ENCODE measurements at regions of chr5 and their contacts with region 1.

Region 1: DNA sequence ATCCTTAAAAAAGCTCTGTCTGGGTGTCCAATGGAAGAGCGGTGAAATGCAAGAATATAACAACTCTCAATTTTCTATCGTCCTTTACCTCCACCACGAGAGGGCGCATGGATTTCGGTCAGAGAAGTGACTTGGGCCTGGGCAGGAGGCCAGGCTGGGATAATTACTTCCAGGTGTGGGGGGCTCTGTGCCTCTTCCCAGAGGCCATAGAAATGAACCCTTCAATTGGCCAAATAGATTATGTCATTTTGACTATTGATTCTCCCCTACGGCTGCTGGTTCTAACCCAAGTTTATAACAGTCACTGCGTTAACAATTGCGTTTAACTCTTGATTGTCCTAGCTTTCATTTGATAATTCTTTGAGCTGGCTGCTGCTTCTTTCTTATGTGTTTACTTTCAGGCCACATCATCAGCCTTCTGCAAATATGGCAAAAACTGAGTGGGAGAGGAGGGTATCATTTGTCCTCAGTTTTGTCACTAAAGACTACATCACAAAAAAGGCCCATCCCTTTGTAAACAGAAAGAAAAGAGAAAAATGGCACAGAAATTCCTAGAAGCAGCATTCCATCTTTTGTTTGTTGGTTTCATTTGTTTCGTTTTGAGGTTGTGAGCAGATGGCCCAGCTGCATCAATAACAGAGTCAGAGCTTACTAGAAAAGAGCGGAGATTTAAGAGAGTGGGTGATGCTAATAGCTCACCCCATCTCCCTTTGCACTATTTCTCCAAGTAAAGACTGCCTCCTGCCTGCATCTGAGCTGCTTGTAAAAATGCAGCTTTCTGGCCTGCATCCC is 45.4 kb upstream of the ZFR start:
- DNase-seq: peak; percentile 76
- ATAC-seq: peak; percentile 69
- H3K4me3 Mint-ChIP-seq: no peak overlapping the region
- H3K27ac Mint-ChIP-seq: no peak overlapping the region
- H3K4me1 Mint-ChIP-seq: no peaks in the 10 kb centered on the region
- H3K27me3 Mint-ChIP-seq: peaks cover 2% of the 10 kb centered on the region

Region 2: DNA sequence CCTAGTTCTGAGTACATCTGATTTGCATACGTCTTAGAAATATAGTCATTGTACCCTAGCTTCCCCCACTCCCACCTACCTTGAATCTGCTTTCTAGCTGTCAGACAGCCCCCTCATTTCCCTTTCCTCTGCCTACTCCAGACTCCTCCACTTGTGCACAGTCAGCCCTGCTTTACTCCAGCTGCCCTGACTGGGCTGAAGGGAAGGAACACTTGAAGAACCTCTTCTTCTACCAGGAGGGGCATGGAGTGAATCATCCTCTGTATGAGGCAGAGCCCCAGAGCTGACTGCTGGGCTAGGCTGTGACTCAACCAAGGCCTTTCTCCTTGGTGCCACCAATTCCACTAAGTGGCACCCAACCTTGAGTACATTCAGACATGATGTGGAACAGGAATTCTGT is 27.4 kb before region 1 on chr5:
- CTCF ChIA-PET with region 1: interaction called, 10 read pairs
- POLR2A ChIA-PET with region 1: no interaction called
- DNase-seq: no peak
- ATAC-seq: no peak
- H3K4me3 Mint-ChIP-seq: no peak overlapping the region
- H3K27ac Mint-ChIP-seq: no peak overlapping the region
- H3K4me1 Mint-ChIP-seq: peaks cover 2% of the 10 kb centered on the region
- H3K27me3 Mint-ChIP-seq: peaks cover 4% of the 10 kb centered on the region

Region 3: DNA sequence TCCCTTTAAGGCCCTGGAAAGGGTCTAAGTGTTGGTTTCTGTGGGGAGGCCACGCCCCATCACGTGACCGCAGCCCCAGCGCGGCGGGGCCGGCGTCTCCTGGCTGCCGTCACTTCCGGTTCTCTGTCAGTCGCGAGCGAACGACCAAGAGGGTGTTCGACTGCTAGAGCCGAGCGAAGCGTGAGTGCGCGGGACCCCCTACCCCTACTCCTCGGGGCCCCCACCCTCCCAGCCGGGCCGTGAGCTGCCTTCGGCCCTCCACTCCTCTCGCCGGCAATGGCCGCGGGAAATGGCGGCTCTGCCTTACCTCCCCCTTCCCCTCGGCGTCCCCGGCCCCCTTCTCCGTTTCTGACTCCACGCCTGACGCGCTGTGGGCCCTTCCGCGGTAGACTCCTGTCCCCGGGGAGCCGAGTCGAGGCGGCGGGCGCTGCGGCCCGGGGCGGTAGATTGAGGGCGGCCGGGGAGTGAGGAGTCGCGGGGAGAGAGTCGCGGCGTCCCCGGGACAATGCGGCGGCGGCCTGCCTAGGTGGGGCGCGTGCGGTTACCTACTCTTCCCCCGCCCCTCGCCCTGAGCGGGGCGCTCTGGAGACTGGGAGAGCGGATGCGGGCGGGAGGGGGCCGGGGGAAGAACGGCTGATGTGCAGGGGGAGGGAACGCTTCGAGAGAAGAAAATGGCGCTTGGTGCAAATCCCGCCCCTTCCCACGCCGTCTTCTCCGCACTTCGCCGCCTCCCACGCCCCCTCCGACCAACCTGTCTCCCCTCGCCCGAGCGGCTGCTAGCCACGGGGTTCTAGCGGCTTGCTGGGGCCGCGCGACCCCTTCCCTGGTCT is 95.7 kb after region 1 on chr5 and contains the start of gene SUB1:
- CTCF ChIA-PET with region 1: interaction called, 193 read pairs
- POLR2A ChIA-PET with region 1: interaction called, 10 read pairs
- DNase-seq: peak; percentile 95
- ATAC-seq: peak; percentile 92
- H3K4me3 Mint-ChIP-seq: peak within 1 kb of the TSS; percentile 82
- H3K27ac Mint-ChIP-seq: peak within 1 kb of the TSS; percentile 88
- H3K4me1 Mint-ChIP-seq: peaks cover 62% of the 10 kb centered on the region
- H3K27me3 Mint-ChIP-seq: no peaks in the 10 kb centered on the region
- total RNA-seq, gene SUB1: 352 to 377 TPM

Region 4: GRCh38 chr5:32595118-32595517 is 105.1 kb after region 1 on chr5:
- CTCF ChIA-PET with region 1: interaction called, 193 read pairs
- POLR2A ChIA-PET with region 1: interaction called, 10 read pairs
- DNase-seq: no peak
- ATAC-seq: peak; percentile 60
- H3K4me3 Mint-ChIP-seq: no peak overlapping the region
- H3K27ac Mint-ChIP-seq: peak overlapping the region; percentile 37
- H3K4me1 Mint-ChIP-seq: peaks cover 67% of the 10 kb centered on the region
- H3K27me3 Mint-ChIP-seq: no peaks in the 10 kb centered on the region

Region 5: DNA sequence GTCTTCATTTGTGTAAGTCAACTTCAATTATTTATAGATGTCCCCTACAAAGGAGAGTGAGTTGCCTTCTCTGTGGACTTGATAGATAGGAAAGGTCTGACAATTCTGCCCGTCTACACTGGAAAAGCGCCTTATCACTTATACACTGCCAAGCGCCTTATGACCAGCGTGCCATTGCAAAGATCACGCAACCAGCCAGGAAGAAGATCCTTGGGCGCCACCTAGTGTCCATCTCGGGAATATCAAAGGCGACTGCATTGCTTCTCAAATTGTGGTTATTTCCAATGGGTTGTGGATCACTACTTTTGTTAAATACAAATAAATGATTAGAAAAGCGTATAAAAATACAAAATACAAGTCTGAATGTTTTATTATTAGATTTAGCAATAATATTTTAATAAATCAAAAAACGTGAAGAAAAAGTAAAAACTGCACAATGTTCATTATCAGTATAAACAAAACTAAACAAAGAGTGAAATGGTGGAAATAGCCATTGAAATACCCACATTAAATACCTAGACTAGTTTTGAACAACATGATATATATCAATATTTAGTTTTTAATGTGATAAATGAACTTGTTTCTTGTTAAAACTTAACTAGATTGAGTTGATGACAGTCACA is 123.2 kb after region 1 on chr5:
- CTCF ChIA-PET with region 1: interaction called, 49 read pairs
- POLR2A ChIA-PET with region 1: no interaction called
- DNase-seq: peak; percentile 87
- ATAC-seq: peak; percentile 70
- H3K4me3 Mint-ChIP-seq: no peak overlapping the region
- H3K27ac Mint-ChIP-seq: no peak overlapping the region
- H3K4me1 Mint-ChIP-seq: peaks cover 3% of the 10 kb centered on the region
- H3K27me3 Mint-ChIP-seq: no peaks in the 10 kb centered on the region

Region 6: GRCh38 chr5:32859211-32859641 is 369.2 kb after region 1 on chr5:
- CTCF ChIA-PET with region 1: no interaction called
- POLR2A ChIA-PET with region 1: no interaction called
- DNase-seq: no peak
- ATAC-seq: no peak
- H3K4me3 Mint-ChIP-seq: no peak overlapping the region
- H3K27ac Mint-ChIP-seq: no peak overlapping the region
- H3K4me1 Mint-ChIP-seq: no peaks in the 10 kb centered on the region
- H3K27me3 Mint-ChIP-seq: no peaks in the 10 kb centered on the region

Region 7: GRCh38 chr5:32887382-32887781 is 397.4 kb after region 1 on chr5:
- CTCF ChIA-PET with region 1: no interaction called
- POLR2A ChIA-PET with region 1: no interaction called
- DNase-seq: no peak
- ATAC-seq: no peak
- H3K4me3 Mint-ChIP-seq: no peak overlapping the region
- H3K27ac Mint-ChIP-seq: no peak overlapping the region
- H3K4me1 Mint-ChIP-seq: no peaks in the 10 kb centered on the region
- H3K27me3 Mint-ChIP-seq: no peaks in the 10 kb centered on the region

Measured in activated CD8-positive, alpha-beta T cell treated with anti-CD3 and anti-CD28 coated beads, Interleukin-2, amount 10 ng/mL, durations not matched to agents 7 days and 5 days (primary cell).